H1 (cell line): ENCODE measurements at regions of chr13 and their contacts with region 1.

Region 1: DNA sequence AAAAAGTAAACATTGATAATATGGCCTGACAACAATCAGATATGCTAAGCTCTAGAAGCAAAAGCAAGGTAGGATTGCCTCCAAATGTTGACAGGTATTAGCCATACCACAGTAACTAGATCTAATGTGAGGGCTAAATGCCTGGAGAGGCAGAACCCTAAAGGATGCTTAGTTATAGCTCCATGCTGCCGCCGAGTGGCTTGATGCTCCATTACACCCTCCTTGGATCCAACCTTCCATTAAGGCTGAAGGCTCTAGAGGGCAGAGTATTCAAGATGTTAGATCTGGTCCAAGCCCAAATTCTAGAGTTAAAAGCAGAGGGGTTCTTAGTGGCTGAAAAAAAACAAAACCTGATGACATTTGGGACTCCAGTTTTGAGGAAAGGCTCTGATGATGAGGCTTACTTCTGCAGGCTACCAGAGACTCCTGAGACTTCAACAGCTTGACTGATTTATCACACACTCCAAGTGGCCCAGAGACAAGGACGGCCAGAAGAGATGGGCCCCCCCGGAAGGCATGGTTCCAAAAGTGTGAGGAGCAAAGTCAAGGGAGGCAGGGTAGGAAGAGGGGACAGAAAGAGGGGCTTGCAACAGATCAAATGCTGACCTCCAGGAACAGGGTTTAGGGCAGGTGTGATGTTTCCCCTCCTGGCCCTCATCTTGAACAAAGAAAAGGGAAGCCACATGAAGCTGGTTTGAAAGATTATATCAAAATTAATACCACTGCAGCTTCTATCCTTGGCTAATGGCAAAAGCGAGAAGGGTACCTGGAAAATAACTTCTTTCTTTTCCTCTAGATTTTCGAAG is 21.9 kb upstream of the CPB2 start:
- DNase-seq: peak; percentile 56 to 91
- H3K4me3 ChIP-seq: no peak overlapping the region
- H3K27ac ChIP-seq: no peak overlapping the region
- H3K4me1 ChIP-seq: no peaks in the 10 kb centered on the region
- H3K27me3 ChIP-seq: no peaks in the 10 kb centered on the region
- CTCF ChIP-seq: peak; percentile 68 to 99 (median 97)
- EP300 ChIP-seq: no peak
- POLR2A ChIP-seq: no peak
- RAD21 ChIP-seq: peak; percentile 90 to 93

Region 2: DNA sequence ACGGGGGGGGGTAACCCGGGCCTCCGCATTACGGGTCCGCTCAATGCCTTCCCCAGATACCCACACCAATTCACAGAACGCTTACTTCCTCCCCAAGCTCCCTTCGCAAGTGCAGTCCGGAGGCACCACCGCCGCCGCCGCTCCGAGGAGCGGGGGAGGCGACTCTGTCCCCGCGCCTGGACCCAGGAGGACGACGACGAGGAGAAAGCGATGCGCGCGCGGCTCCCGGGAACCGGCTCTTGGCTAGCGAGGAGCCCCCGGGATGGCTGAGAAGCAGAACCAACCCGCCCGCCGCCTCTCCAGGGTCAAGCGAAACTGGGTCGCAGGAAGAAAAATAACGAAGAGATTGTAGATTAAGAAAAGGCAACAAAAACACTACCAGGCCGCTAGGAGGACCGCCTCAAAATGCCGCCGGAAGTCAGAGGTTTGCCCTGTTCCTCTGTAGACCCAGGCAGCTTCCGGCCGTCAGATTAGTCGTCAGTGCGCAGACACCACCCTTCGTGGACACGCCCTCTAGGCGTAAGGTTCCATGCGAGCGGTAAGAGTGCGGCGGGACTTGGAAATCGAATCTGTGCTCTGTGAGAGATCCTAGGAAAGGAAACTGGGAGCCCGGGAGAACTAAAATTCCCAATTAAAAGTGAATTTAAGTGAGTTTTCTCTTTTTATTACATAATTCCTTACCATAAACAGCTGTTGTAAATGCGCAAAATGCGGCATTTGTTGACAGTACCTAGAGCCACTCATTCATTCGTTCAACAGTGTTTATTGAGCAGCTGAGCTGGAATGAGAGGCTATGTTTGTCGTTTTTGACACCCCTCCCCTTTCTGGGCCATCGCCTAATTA is 74.2 kb before region 1 on chr13 and contains the start of gene ZC3H13:
- CTCF ChIA-PET with region 1: interaction called, 10 read pairs
- POLR2A ChIA-PET with region 1: interaction called, 6 read pairs
- DNase-seq: peak; percentile 84 to 85
- H3K4me3 ChIP-seq: peak within 1 kb of the TSS; percentile 84 to 99 (median 92)
- H3K27ac ChIP-seq: peak within 1 kb of the TSS; percentile 80
- H3K4me1 ChIP-seq: peaks cover 0 to 2% (median 0%) of the 10 kb centered on the region in 4 experiments; a peak in 1 of 7 replicates
- H3K27me3 ChIP-seq: no peaks in the 10 kb centered on the region
- CTCF ChIP-seq: peak in 2 of 3 experiments; percentile 11 to 48; a peak in 2 of 4 replicates
- EP300 ChIP-seq: peak in 1 of 2 experiments; percentile 76; a peak in 1 of 3 replicates
- POLR2A ChIP-seq: peak; percentile 78 to 96
- RAD21 ChIP-seq: no peak
- total RNA-seq, gene ZC3H13: 57.8 and 60.9 TPM in 2 replicates

Region 3: GRCh38 chr13:46071590-46072249 is 55.0 kb before region 1 on chr13:
- CTCF ChIA-PET with region 1: interaction called, 13 read pairs
- POLR2A ChIA-PET with region 1: no interaction called
- DNase-seq: no peak
- H3K4me3 ChIP-seq: no peak overlapping the region
- H3K27ac ChIP-seq: no peak overlapping the region
- H3K4me1 ChIP-seq: no peaks in the 10 kb centered on the region
- H3K27me3 ChIP-seq: no peaks in the 10 kb centered on the region
- CTCF ChIP-seq: peak; percentile 31 to 56 (median 45)
- EP300 ChIP-seq: no peak
- POLR2A ChIP-seq: no peak
- RAD21 ChIP-seq: peak in 1 of 2 experiments; percentile 43; a peak in 2 of 4 replicates

Region 4: DNA sequence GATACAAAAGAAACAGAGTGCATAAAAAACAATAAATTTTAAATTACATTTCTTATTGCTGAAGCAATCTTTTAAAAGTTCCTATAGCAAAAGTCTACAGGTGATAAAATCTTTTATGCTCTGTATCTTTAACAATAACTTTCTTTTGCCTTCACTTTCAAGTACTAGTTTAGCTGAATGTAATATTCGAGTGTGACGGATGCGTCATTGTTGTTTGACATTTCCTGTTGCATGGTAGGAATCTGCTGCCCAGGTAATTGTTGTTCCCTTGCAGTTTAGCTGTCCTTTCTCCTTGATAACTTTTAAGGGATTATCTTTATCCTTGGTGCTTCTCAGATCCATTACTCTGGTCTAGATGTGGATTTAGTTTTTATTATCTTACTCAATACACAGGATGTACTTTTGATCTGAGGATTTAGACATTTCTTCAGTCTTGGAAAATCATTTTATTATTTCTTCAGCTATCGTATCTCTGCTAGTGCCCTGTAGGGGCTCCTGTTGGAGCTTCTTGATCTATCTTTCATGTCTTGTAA is 19.9 kb before region 1 on chr13:
- CTCF ChIA-PET with region 1: interaction called, 10 read pairs
- POLR2A ChIA-PET with region 1: no interaction called
- DNase-seq: no peak
- H3K4me3 ChIP-seq: no peak overlapping the region
- H3K27ac ChIP-seq: no peak overlapping the region
- H3K4me1 ChIP-seq: no peaks in the 10 kb centered on the region
- H3K27me3 ChIP-seq: no peaks in the 10 kb centered on the region
- CTCF ChIP-seq: no peak
- EP300 ChIP-seq: no peak
- POLR2A ChIP-seq: no peak
- RAD21 ChIP-seq: no peak

Region 5: DNA sequence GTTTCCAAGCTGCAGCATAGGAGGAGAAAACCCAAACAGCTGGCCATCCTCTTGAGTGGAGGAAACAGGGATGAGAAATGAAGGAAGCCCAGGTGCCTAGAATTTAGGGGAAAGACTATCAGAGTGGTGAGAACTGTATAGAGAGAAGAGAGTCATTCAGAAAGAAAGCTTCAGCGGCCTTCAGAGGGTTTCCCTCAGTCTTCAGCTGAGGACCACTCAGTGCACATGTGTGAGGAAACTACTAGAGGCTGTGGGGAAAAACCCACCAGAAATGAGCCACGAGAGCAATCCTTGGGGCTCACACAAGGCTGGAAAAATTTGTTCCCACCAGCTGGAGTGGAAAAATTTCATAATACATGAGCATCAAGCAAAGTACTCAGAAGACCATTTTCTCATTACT is 13.3 kb after region 1 on chr13:
- CTCF ChIA-PET with region 1: interaction called, 21 read pairs
- POLR2A ChIA-PET with region 1: no interaction called
- DNase-seq: no peak
- H3K4me3 ChIP-seq: no peak overlapping the region
- H3K27ac ChIP-seq: no peak overlapping the region
- H3K4me1 ChIP-seq: peaks cover 0 to 3% (median 2%) of the 10 kb centered on the region in 4 experiments; a peak in 3 of 7 replicates
- H3K27me3 ChIP-seq: no peaks in the 10 kb centered on the region
- CTCF ChIP-seq: no peak
- EP300 ChIP-seq: no peak
- POLR2A ChIP-seq: no peak
- RAD21 ChIP-seq: no peak

Region 6: DNA sequence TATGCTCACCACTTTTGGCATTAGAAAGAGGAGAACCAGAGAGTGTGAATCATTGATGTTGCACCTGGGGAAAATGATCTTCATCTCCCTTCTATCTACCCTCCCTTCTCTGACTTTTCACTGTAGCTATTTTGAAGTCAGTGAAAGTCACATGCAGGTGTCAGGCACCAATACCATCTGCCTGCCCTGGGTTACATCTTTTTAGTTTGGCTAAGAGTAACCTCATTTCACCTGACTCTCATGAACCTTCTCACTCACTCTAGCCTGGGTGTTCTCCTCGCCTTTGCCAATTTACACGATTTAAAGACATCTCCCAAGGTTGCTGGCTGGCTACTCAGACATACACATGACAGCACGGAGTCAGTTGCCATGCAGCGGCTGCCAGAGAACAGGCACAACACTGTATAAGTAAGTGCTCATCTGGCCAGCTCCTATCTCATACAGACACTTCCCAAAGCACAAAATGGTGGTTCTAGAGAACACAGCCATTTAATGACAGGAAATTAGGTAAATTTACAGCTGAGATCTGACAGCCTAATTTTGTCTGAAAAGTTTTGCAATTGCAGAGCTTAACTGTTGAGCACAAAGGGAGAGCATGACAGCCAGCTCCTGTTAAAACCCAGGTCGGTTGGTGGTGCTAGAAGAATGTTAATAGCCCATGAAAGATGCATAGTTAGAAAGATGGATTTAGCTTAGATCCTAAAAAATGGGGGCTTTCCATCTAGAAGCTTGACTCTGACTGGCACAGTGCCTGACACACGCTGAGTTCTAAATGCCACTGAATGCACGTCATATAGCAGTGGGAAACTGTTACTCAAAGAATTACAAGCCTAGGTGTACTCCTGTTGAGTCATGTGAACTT is 22.7 kb after region 1 on chr13:
- CTCF ChIA-PET with region 1: interaction called, 22 read pairs
- POLR2A ChIA-PET with region 1: no interaction called
- DNase-seq: no peak
- H3K4me3 ChIP-seq: no peak overlapping the region
- H3K27ac ChIP-seq: no peak overlapping the region
- H3K4me1 ChIP-seq: no peaks in the 10 kb centered on the region
- H3K27me3 ChIP-seq: no peaks in the 10 kb centered on the region
- CTCF ChIP-seq: no peak
- EP300 ChIP-seq: no peak
- POLR2A ChIP-seq: no peak
- RAD21 ChIP-seq: no peak

Region 7: GRCh38 chr13:46160471-46161066 is 33.8 kb after region 1 on chr13:
- CTCF ChIA-PET with region 1: interaction called, 20 read pairs
- POLR2A ChIA-PET with region 1: no interaction called
- DNase-seq: no peak
- H3K4me3 ChIP-seq: no peak overlapping the region
- H3K27ac ChIP-seq: no peak overlapping the region
- H3K4me1 ChIP-seq: no peaks in the 10 kb centered on the region
- H3K27me3 ChIP-seq: no peaks in the 10 kb centered on the region
- CTCF ChIP-seq: peak in 2 of 3 experiments; percentile 62 to 69; a peak in 3 of 4 replicates
- EP300 ChIP-seq: no peak
- POLR2A ChIP-seq: no peak
- RAD21 ChIP-seq: peak; percentile 71 to 81